Adrenal gland (tissue), 19 donors: ENCODE measurements at regions of chr16 and their contacts with region 1.

Region 1: GRCh38 chr16:59289151-59289550 is 555.0 kb upstream of the GOT2 start:
- DNase-seq: no peak
- H3K4me3 ChIP-seq: no peak overlapping the region
- H3K27ac ChIP-seq: no peak overlapping the region
- H3K4me1 ChIP-seq: no peaks in the 10 kb centered on the region
- H3K27me3 ChIP-seq: no peaks in the 10 kb centered on the region
- CTCF ChIP-seq: no peak
- POLR2A ChIP-seq: no peak

Region 2: GRCh38 chr16:59385959-59386358 is 96.8 kb after region 1 on chr16:
- intact Hi-C with region 1: loop called in 1 of 2 experiments (anchors 5 kb)
- DNase-seq: peak in 6 of 7 donors; percentile 11 to 61 (median 24)
- H3K4me3 ChIP-seq: no peak overlapping the region
- H3K27ac ChIP-seq: peak overlapping the region in 1 of 5 donors; percentile 22
- H3K4me1 ChIP-seq: no peaks in the 10 kb centered on the region
- H3K27me3 ChIP-seq: no peaks in the 10 kb centered on the region
- CTCF ChIP-seq: no peak
- POLR2A ChIP-seq: no peak